Caco-2 (cell line): ENCODE measurements at regions of chr13 and their contacts with region 1.

Region 1: GRCh38 chr13:32164622-32165268 is 133.2 kb downstream of the FRY start:
- DNase-seq: peak; percentile 76 to 81
- H3K4me3 ChIP-seq: no peak overlapping the region
- H3K4me3 Mint-ChIP-seq: no peak overlapping the region
- H3K27ac Mint-ChIP-seq: peak overlapping the region; percentile 82
- H3K4me1 ChIP-seq: peaks cover 52% of the 10 kb centered on the region
- H3K4me1 Mint-ChIP-seq: peaks cover 46% of the 10 kb centered on the region
- H3K27me3 ChIP-seq: no peaks in the 10 kb centered on the region
- H3K27me3 Mint-ChIP-seq: no peaks in the 10 kb centered on the region
- CTCF ChIP-seq: peak; percentile 73 to 77

Region 2: DNA sequence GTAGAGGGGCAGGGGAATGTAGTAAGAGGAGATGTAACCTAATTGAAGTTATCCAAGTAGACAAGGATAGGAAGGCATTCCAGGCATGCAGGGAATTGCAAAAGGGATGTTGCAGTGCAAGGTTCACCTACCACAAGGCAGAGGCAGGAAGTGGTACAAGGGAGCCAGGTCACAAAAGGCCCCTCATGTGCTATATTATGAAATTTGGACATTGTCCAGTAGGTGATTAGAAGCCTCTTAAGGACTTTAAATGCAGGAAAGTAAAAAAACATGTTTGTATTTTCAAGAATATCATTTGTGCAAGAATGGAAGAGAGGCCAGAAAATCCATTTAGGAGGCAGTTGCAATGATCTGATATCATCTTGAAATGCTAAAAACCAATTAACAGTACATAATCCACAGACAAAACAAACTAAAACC is 21.8 kb before region 1 on chr13:
- CTCF ChIA-PET with region 1: interaction called, 4 read pairs
- POLR2A ChIA-PET with region 1: no interaction called
- intact Hi-C with region 1: loop called (anchors 2 kb)
- DNase-seq: peak; percentile 88 to 93
- H3K4me3 ChIP-seq: no peak overlapping the region
- H3K4me3 Mint-ChIP-seq: peak overlapping the region; percentile 34
- H3K27ac Mint-ChIP-seq: peak overlapping the region; percentile 89
- H3K4me1 ChIP-seq: peaks cover 50% of the 10 kb centered on the region
- H3K4me1 Mint-ChIP-seq: peaks cover 64% of the 10 kb centered on the region
- H3K27me3 ChIP-seq: no peaks in the 10 kb centered on the region; the same call in 1 of the 2 replicates
- H3K27me3 Mint-ChIP-seq: no peaks in the 10 kb centered on the region
- CTCF ChIP-seq: no peak

Region 3: GRCh38 chr13:32195713-32196112 is 31.0 kb after region 1 on chr13:
- CTCF ChIA-PET with region 1: interaction called, 10 read pairs
- POLR2A ChIA-PET with region 1: no interaction called
- intact Hi-C with region 1: loop called (anchors 2 kb)
- DNase-seq: peak in 1 of 2 experiments; percentile 51
- H3K4me3 ChIP-seq: no peak overlapping the region
- H3K4me3 Mint-ChIP-seq: no peak overlapping the region
- H3K27ac Mint-ChIP-seq: peak overlapping the region; percentile 35
- H3K4me1 ChIP-seq: peaks cover 34% of the 10 kb centered on the region
- H3K4me1 Mint-ChIP-seq: peaks cover 35% of the 10 kb centered on the region
- H3K27me3 ChIP-seq: no peaks in the 10 kb centered on the region
- H3K27me3 Mint-ChIP-seq: no peaks in the 10 kb centered on the region
- CTCF ChIP-seq: no peak

Region 4: DNA sequence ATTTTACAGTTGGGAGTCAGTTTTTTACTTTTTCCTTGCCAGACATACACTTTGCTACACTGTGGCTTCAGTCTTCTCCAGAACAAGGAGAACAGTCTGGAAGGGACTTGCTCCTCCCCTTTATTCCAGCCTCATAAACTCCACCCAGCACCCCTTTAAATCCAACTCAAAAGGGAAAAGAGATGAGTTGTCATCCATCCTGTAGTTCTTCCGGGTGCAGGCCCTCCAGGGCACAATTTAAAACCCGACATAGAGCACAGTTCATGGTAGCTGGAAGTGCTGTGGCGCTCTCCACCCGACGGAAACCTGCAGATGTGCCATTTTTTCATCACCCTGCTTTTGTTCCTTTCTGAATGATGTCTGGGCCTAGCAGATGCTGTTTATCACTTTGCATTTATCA is 51.5 kb after region 1 on chr13:
- CTCF ChIA-PET with region 1: interaction called, 12 read pairs
- POLR2A ChIA-PET with region 1: no interaction called
- intact Hi-C with region 1: loop called (anchors 2 kb)
- DNase-seq: peak; percentile 64 to 67
- H3K4me3 ChIP-seq: no peak overlapping the region
- H3K4me3 Mint-ChIP-seq: peak overlapping the region; percentile 73
- H3K27ac Mint-ChIP-seq: peak overlapping the region; percentile 85
- H3K4me1 ChIP-seq: peaks cover 70% of the 10 kb centered on the region
- H3K4me1 Mint-ChIP-seq: peaks cover 42% of the 10 kb centered on the region
- H3K27me3 ChIP-seq: no peaks in the 10 kb centered on the region
- H3K27me3 Mint-ChIP-seq: no peaks in the 10 kb centered on the region
- CTCF ChIP-seq: no peak

Region 5: DNA sequence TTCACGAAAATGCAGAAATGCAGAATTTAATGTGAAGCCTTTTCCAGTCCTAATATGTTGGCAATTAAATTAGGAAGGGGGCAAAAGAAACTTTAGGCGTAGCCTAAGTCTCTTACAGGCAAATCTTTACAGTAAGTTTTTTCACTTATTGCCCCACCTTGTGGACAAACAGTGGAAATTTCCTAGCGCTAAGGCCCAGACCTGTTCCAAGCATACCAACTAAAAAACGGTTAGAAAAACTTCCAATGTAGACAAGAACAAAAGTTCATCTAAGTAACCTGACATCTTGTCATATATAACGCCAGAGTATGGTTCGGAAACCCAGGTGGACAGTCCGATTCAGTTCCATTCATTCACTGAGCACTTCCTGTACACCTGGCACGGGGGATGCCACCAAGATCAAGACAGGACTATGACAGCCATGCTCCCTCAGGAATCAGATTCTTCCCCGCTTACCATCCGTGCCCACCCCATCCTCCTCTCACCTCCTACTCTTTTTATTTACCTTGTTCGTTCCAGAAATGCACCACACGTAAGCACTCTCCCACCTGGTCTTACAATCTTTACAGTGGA is 145.5 kb after region 1 on chr13:
- CTCF ChIA-PET with region 1: interaction called, 10 read pairs
- POLR2A ChIA-PET with region 1: interaction called, 3 read pairs
- intact Hi-C with region 1: loop called (anchors 1 kb)
- DNase-seq: peak in 1 of 2 experiments; percentile 62
- H3K4me3 ChIP-seq: no peak overlapping the region
- H3K4me3 Mint-ChIP-seq: no peak overlapping the region
- H3K27ac Mint-ChIP-seq: no peak overlapping the region
- H3K4me1 ChIP-seq: peaks cover 23% of the 10 kb centered on the region
- H3K4me1 Mint-ChIP-seq: peaks cover 6% of the 10 kb centered on the region
- H3K27me3 ChIP-seq: no peaks in the 10 kb centered on the region
- H3K27me3 Mint-ChIP-seq: no peaks in the 10 kb centered on the region
- CTCF ChIP-seq: peak; percentile 70 to 84

Region 6: DNA sequence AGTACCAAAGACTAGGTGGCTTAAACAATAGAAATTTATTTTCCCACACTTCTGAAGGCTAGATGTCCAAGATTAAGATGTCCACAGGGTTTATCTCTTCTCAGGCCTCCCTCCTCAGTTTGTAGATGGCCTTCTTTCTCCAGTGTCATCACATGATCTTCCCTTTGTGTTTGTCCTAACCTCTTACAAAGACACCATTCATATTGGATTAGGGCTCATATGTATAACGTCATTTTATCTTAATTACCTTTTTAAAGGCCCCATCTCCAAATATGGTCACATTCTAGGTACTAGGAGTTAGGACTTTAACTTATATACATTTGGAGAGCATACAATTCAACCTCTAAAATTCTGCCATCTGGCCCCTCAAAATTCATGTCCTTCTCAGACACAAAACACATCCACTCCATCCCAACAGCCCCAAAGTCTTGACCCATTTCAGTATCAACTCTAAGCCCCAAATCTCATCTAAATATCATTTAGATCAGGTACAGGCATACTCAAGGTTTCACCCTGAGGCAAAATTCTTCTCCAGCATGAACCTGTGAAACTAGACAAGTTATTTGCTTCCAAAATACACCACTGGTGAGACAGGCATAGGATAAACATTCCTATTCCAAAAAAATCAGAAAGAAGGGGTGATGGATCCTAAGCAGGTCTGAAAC is 339.6 kb after region 1 on chr13:
- CTCF ChIA-PET with region 1: no interaction called
- POLR2A ChIA-PET with region 1: no interaction called
- intact Hi-C with region 1: no loop called
- DNase-seq: no peak
- H3K4me3 ChIP-seq: no peak overlapping the region
- H3K4me3 Mint-ChIP-seq: no peak overlapping the region
- H3K27ac Mint-ChIP-seq: no peak overlapping the region
- H3K4me1 ChIP-seq: no peaks in the 10 kb centered on the region
- H3K4me1 Mint-ChIP-seq: peaks cover 8% of the 10 kb centered on the region
- H3K27me3 ChIP-seq: no peaks in the 10 kb centered on the region
- H3K27me3 Mint-ChIP-seq: no peaks in the 10 kb centered on the region
- CTCF ChIP-seq: no peak